ENCODE measurements at regions of chr13 and their contacts with region 1.

Region 1: GRCh38 chr13:111228262-111229144 is 91.9 kb upstream of the TEX29 start:
- DNase-seq: no peak
- ATAC-seq: no peak
- H3K4me3 ChIP-seq: no peak overlapping the region
- H3K27ac ChIP-seq: no peak overlapping the region
- H3K4me1 ChIP-seq: no peaks in the 10 kb centered on the region
- H3K27me3 ChIP-seq: no peaks in the 10 kb centered on the region
- CTCF ChIP-seq: no peak
- EP300 ChIP-seq: no peak
- POLR2A ChIP-seq: no peak
- RAD21 ChIP-seq: no peak

Region 2: DNA sequence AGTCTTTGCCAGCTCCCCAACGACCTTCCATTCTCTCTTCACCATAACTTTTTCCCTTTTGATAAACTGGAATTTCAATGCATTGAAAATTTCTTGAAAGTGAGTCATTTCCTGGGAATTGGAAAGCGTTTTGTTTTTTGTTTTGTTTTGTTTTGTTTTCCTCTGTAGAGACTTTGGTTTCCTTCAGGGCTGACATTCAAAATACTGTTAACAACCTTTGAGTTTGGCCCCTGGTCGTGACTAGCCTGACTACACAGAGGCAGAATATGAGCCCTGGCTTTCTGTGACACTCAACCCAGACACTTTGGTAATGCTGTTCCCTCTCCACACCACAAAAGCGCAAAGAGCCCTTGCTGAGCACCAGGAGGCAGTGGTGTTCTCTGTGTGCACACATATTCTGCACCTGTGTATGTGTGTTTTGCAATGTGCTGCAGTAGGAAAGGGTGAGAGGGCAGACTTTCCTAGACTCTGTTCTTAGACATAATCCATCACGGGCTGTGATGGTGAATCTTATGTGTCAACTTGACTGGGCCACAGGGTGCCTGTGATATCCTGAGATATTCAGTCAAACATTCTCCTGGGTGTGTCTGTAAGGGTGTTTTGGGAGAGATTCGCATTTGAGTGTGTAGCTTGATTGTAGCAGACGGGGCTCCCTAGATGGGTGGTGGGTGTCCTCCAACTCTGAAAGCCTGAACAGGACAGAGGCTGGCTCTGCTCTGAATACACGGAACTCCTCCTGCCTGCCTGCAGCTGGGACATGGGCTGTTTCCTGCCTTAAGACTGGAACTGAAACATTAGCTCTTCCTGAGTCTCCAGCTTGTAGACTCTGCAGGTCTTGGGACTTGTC is 284.2 kb before region 1 on chr13:
- CTCF ChIA-PET with region 1: no interaction called
- POLR2A ChIA-PET with region 1: no interaction called
- in situ Hi-C with region 1: no loop called
- intact Hi-C with region 1: loop called (anchors 10 kb)
- DNase-seq: peak; percentile 39 to 81 (median 52)
- ATAC-seq: peak; percentile 97
- H3K4me3 ChIP-seq: no peak overlapping the region
- H3K27ac ChIP-seq: peak overlapping the region; percentile 59; the same call in 2 of the 3 replicates
- H3K4me1 ChIP-seq: peaks cover 10 to 13% of the 10 kb centered on the region in 2 experiments; a peak in 4 of 5 replicates
- H3K27me3 ChIP-seq: no peaks in the 10 kb centered on the region
- CTCF ChIP-seq: peak; percentile 81 to 89 (median 88)
- EP300 ChIP-seq: no peak
- POLR2A ChIP-seq: no peak
- RAD21 ChIP-seq: peak; percentile 91 to 99

Region 3: GRCh38 chr13:111262715-111263114 is 34.2 kb after region 1 on chr13:
- CTCF ChIA-PET with region 1: no interaction called
- POLR2A ChIA-PET with region 1: no interaction called
- in situ Hi-C with region 1: no loop called
- intact Hi-C with region 1: no loop called
- DNase-seq: no peak
- ATAC-seq: no peak
- H3K4me3 ChIP-seq: no peak overlapping the region
- H3K27ac ChIP-seq: no peak overlapping the region
- H3K4me1 ChIP-seq: no peaks in the 10 kb centered on the region
- H3K27me3 ChIP-seq: no peaks in the 10 kb centered on the region
- CTCF ChIP-seq: no peak
- EP300 ChIP-seq: no peak
- POLR2A ChIP-seq: no peak
- RAD21 ChIP-seq: no peak

Region 4: GRCh38 chr13:111937777-111938311 is 709.3 kb after region 1 on chr13:
- CTCF ChIA-PET with region 1: no interaction called
- POLR2A ChIA-PET with region 1: no interaction called
- in situ Hi-C with region 1: no loop called
- intact Hi-C with region 1: no loop called
- DNase-seq: no peak
- ATAC-seq: no peak
- H3K4me3 ChIP-seq: no peak overlapping the region
- H3K27ac ChIP-seq: no peak overlapping the region
- H3K4me1 ChIP-seq: no peaks in the 10 kb centered on the region
- H3K27me3 ChIP-seq: no peaks in the 10 kb centered on the region
- CTCF ChIP-seq: no peak
- EP300 ChIP-seq: no peak
- POLR2A ChIP-seq: no peak
- RAD21 ChIP-seq: no peak

Measured in K562 (cell line).